Right cardiac atrium (tissue), 5 donors: ENCODE measurements at regions of chr1 and their contacts with region 1.

Region 1: GRCh38 chr1:154589780-154590179 is 18.2 kb downstream of the ADAR start:
- DNase-seq: no peak
- ATAC-seq: no peak
- H3K4me3 ChIP-seq: no peak overlapping the region
- H3K27ac ChIP-seq: no peak overlapping the region
- H3K4me1 ChIP-seq: no peaks in the 10 kb centered on the region
- H3K27me3 ChIP-seq: no peaks in the 10 kb centered on the region

Region 2: DNA sequence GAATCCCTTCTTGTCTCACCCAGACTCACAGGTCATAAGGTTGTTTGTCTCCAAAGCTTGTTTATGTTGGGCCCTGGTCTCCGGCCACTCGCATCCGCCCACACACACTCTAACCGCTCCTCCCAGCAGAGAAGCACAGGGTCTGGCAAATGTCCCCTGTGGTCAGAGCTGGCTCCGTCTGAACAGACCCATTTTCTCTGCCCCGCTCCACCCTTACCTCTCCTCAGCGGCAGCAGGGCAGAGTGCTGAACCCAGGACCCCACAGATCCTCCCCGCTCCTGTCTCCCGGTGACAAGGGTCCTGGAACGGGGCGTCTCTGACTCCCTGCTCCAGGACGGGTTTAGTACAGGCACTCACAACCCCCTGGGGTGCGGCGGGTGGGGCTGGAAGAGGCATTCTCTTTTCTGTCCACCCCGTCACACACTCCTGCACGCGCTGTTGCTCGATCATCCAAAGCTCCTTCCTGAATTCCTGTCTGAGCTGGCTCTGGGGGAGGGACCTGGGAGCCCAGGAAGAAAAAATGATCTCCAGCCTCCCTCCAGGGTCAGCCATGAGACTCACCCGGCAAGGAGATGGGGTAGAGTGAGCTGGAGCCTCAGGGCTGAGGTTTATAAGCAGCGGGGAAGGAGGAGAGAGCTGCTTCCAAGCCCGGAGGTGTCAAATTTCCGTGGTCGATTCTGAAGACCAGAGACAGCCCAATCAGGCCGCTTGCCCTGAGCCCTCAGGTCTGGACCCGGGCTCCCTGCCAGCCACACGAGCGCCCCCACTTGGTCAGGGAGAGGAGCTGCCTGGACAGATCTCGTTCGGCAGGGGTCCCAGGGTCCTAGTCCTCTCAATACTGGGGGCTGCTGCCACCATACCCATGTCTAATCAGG is 962.6 kb before region 1 on chr1 and contains the start of gene S100A13:
- intact Hi-C with region 1: no loop called
- DNase-seq: peak; percentile 81 to 94 (median 92)
- ATAC-seq: peak; percentile 74 to 75
- H3K4me3 ChIP-seq: peak within 1 kb of the TSS; percentile 40
- H3K27ac ChIP-seq: peak within 1 kb of the TSS; percentile 92
- H3K4me1 ChIP-seq: peaks cover 22% of the 10 kb centered on the region
- H3K27me3 ChIP-seq: no peaks in the 10 kb centered on the region
- total RNA-seq, gene S100A13: 183 to 265 (median 220) TPM

Region 3: GRCh38 chr1:154442006-154442740 is 147.6 kb before region 1 on chr1:
- intact Hi-C with region 1: no loop called
- DNase-seq: peak in 2 of 3 donors; percentile 50 to 58
- ATAC-seq: peak; percentile 37 to 52
- H3K4me3 ChIP-seq: no peak overlapping the region
- H3K27ac ChIP-seq: no peak overlapping the region
- H3K4me1 ChIP-seq: no peaks in the 10 kb centered on the region
- H3K27me3 ChIP-seq: no peaks in the 10 kb centered on the region

Region 4: DNA sequence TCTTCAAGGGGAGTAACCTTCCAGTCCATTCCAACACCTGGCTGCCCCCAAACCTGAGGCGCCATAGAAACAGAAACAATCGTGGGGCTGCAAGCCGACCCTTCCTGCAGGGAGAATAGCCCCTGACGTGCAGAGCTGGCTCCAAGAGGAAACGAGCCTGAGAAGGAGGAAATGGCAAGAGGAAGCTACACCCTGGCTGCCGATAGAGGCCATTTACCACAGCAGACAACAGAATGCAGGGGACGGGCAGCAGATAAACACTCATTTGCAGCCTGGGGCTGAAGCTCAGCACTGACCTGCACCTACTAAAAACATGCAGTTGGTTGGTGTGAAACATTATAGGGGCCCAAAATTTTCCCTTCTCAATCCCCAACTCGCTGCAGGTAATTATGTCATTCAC is 96.5 kb before region 1 on chr1:
- intact Hi-C with region 1: no loop called
- DNase-seq: peak; percentile 52 to 72 (median 71)
- ATAC-seq: peak; percentile 65 to 88
- H3K4me3 ChIP-seq: no peak overlapping the region
- H3K27ac ChIP-seq: peak overlapping the region; percentile 21
- H3K4me1 ChIP-seq: peaks cover 5% of the 10 kb centered on the region
- H3K27me3 ChIP-seq: no peaks in the 10 kb centered on the region

Region 5: DNA sequence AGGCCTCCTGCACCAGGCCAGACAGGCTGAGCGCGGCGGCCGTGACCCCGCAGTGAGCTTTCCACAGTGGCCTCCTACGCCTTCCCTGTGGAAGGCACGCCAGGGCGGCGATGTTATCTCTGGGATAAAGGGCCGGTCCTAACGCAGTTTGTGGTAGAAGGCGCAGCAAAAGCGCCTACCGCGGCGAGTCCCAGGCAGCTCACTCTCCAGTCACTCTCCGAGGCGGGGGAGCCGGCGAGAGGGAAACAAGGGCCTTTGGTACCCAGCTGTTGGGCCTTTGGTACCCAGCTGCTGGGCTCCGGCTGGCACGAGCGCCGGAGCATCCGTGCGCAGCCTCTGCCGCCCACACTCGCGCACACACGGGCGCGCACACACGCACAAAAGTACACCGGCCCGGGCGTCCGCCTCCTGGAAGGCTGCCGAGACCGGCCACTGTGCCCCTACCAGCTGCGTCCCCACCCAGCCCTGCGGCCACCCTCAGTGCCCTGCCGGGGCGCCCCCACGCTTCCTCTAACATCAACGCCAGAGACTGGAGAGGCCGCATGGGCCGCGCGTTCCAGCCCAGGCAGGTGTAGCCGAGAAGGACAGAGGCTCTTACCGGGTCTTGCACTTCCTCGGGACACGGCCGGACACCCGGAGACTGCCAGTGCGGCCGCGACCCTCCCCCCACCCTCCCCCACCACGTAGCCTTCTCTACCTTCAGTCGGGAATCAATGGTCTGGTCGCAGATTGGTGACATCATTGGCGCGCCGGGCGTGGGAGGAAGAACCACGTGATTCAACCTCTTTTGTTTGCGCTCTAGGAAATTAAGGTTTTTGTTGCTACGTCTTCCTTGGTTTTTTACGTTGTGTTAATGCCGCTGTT is 37.7 kb after region 1 on chr1:
- intact Hi-C with region 1: no loop called
- DNase-seq: peak; percentile 92 to 97 (median 96)
- ATAC-seq: peak; percentile 86 to 90
- H3K4me3 ChIP-seq: peak overlapping the region; percentile 97
- H3K27ac ChIP-seq: peak overlapping the region; percentile 99
- H3K4me1 ChIP-seq: peaks cover 6% of the 10 kb centered on the region
- H3K27me3 ChIP-seq: no peaks in the 10 kb centered on the region

Region 6: DNA sequence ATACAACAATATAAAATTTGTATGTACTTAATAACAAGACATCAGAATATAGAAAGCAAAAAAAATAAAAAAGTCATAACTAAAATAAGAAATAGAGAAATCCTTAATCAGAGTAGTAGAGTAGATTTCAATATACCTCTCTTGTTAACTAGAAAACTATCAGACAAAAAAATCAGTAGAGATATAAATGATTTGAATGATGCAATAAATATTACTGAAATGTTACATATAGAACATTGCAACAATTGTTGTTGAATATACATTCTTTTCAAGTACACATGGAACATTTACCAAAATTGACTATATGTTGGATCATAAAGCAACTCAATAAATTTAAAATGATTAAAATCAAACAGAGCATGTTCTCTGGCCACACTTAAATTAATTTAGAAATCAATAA is 50.1 kb after region 1 on chr1:
- intact Hi-C with region 1: loop called in 1 of 4 experiments (anchors 5 kb)
- DNase-seq: no peak
- ATAC-seq: no peak
- H3K4me3 ChIP-seq: no peak overlapping the region
- H3K27ac ChIP-seq: no peak overlapping the region
- H3K4me1 ChIP-seq: no peaks in the 10 kb centered on the region
- H3K27me3 ChIP-seq: no peaks in the 10 kb centered on the region